ENCODE measurements at regions of chr12 and their contacts with region 1.

Region 1: DNA sequence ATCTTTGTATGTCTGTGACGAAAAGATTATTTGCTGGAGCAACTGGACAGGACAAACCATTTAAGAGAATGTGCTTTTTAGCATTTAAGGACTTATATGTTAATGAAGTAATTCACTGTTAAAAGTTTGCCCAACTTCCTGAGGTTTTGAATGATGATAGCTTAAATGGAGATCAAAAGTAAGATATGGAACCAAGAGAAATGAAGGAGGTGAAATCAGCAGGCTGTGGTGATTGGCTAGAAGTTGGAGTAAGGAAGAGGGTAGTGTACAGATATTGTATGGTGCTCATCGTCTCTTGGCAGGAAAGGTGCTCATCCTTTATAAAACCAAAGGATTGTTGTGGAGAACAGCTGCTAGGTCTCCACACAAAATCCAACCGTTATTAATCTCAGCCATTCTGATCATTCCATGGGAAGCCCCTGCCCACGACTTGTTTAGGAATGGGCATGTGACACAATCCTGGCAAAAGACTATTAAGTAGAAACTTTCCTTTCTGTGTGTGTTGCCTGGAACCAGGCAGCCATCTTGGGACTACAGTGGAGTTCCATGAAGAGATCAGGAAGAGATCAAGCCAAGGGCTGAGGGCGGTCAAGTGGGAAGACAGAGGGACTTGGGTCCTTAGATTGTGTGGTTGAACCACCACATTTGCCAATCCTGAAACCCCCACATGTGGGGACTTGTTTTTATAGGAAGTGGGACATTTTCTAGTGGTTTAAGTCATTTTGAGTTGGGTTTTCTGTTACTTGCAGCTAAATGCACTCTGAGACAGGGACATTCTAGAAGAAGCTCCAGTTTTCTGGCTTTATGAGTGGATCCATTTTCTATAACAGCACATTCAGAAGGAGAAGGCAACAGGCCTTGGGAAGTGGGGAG is 56.8 kb upstream of the CHST11 start:
- DNase-seq: no peak
- H3K4me3 ChIP-seq: no peak overlapping the region
- H3K27ac ChIP-seq: no peak overlapping the region
- H3K4me1 ChIP-seq: no peaks in the 10 kb centered on the region
- H3K27me3 ChIP-seq: no peaks in the 10 kb centered on the region
- CTCF ChIP-seq: no peak
- EP300 ChIP-seq: no peak
- POLR2A ChIP-seq: no peak

Region 2: DNA sequence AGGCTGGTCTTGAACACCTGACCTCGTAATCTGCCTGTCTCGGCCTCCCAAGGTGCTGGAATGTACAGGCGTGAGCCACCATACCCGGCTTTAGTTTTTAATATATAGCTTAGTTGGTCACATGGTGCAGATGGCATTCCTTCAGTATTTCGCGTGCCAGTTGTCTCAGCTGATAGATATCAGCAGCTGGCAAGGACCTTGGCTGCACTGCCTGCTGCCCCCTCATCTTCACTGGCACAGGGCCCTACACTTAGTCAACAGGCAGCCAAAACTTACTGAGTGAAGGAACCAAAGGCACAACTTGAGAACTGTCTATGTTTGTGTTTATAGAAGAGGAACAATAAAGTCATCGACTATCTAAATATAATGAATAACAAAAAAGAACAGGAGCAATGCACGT is 65.4 kb before region 1 on chr12:
- in situ Hi-C with region 1: no loop called
- intact Hi-C with region 1: no loop called
- DNase-seq: no peak
- H3K4me3 ChIP-seq: no peak overlapping the region
- H3K27ac ChIP-seq: no peak overlapping the region
- H3K4me1 ChIP-seq: no peaks in the 10 kb centered on the region
- H3K27me3 ChIP-seq: no peaks in the 10 kb centered on the region
- CTCF ChIP-seq: no peak
- EP300 ChIP-seq: no peak
- POLR2A ChIP-seq: no peak

Region 3: GRCh38 chr12:104827587-104827986 is 427.6 kb after region 1 on chr12:
- in situ Hi-C with region 1: no loop called
- intact Hi-C with region 1: loop called (anchors 1 kb)
- DNase-seq: no peak
- H3K4me3 ChIP-seq: no peak overlapping the region
- H3K27ac ChIP-seq: no peak overlapping the region
- H3K4me1 ChIP-seq: no peaks in the 10 kb centered on the region
- H3K27me3 ChIP-seq: no peaks in the 10 kb centered on the region
- CTCF ChIP-seq: peak in 1 of 5 experiments; percentile 14
- EP300 ChIP-seq: no peak
- POLR2A ChIP-seq: no peak

Measured in transverse colon (tissue), 4 donors.